ENCODE measurements at regions of chr5 and their contacts with region 1.

Region 1: GRCh38 chr5:87267574-87268125 is at the start of gene RASA1:
- DNase-seq: peak; percentile 92 to 94
- ATAC-seq: peak; percentile 86 to 87
- H3K4me3 ChIP-seq: peak within 1 kb of the TSS; percentile 76
- H3K27ac ChIP-seq: peak within 1 kb of the TSS; percentile 90 to 97
- H3K4me1 ChIP-seq: peaks cover 10% of the 10 kb centered on the region
- CTCF ChIP-seq: no peak
- EP300 ChIP-seq: no peak
- POLR2A ChIP-seq: peak; percentile 99
- RAD21 ChIP-seq: no peak; a peak in 1 of 5 replicates
- polyA plus RNA-seq, gene RASA1: 40.8 and 41.5 TPM in 2 replicates

Region 2: GRCh38 chr5:87121304-87122150 is 146.1 kb before region 1 on chr5:
- CTCF ChIA-PET with region 1: interaction called, 4 read pairs
- POLR2A ChIA-PET with region 1: interaction called, 11 read pairs
- DNase-seq: peak; percentile 10 to 46
- ATAC-seq: peak; percentile 84 to 90; a peak in 5 of 6 replicates
- H3K4me3 ChIP-seq: no peak overlapping the region
- H3K27ac ChIP-seq: peak overlapping the region; percentile 61 to 79
- H3K4me1 ChIP-seq: peaks cover 23% of the 10 kb centered on the region; the same call in 2 of the 3 replicates
- CTCF ChIP-seq: no peak
- EP300 ChIP-seq: no peak
- POLR2A ChIP-seq: no peak
- RAD21 ChIP-seq: no peak

Region 3: GRCh38 chr5:87282269-87282668 is 14.6 kb after region 1 on chr5:
- CTCF ChIA-PET with region 1: no interaction called
- POLR2A ChIA-PET with region 1: interaction called, 10 read pairs
- DNase-seq: no peak
- ATAC-seq: no peak
- H3K4me3 ChIP-seq: no peak overlapping the region
- H3K27ac ChIP-seq: no peak overlapping the region
- H3K4me1 ChIP-seq: peaks cover 2% of the 10 kb centered on the region; the same call in 1 of the 3 replicates
- CTCF ChIP-seq: no peak
- EP300 ChIP-seq: no peak
- POLR2A ChIP-seq: no peak
- RAD21 ChIP-seq: no peak

Region 4: DNA sequence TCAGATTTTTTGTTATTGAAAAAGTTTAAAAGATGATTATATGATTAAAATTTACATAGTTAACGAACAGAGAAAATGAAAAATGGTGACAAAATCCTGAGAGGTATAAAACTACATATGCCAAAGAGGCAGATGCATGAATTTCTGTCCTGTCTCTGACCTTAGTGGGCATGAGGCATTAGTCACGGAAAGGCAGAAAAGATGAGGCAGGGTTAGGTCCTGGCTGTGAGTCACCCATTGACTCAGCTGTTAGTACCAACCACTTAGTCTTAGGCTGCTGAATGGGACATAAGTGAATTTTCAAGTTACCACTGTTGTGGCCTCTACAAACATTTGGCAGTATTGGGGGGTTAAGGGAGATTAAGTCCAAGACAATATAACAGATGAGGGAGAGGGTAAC is 33.1 kb after region 1 on chr5:
- CTCF ChIA-PET with region 1: interaction called, 3 read pairs
- POLR2A ChIA-PET with region 1: interaction called, 12 read pairs
- DNase-seq: peak; percentile 73 to 82
- ATAC-seq: peak; percentile 100
- H3K4me3 ChIP-seq: no peak overlapping the region
- H3K27ac ChIP-seq: peak overlapping the region; percentile 36 to 49; a peak in 3 of 6 replicates
- H3K4me1 ChIP-seq: peaks cover 50% of the 10 kb centered on the region
- CTCF ChIP-seq: no peak
- EP300 ChIP-seq: no peak
- POLR2A ChIP-seq: no peak
- RAD21 ChIP-seq: no peak

Region 5: GRCh38 chr5:87560528-87560927 is 292.9 kb after region 1 on chr5:
- CTCF ChIA-PET with region 1: no interaction called
- POLR2A ChIA-PET with region 1: no interaction called
- DNase-seq: no peak
- ATAC-seq: no peak
- H3K4me3 ChIP-seq: no peak overlapping the region
- H3K27ac ChIP-seq: no peak overlapping the region
- H3K4me1 ChIP-seq: no peaks in the 10 kb centered on the region
- CTCF ChIP-seq: no peak
- EP300 ChIP-seq: no peak
- POLR2A ChIP-seq: no peak
- RAD21 ChIP-seq: no peak

Measured in A549 (cell line).